ENCODE measurements at regions of chr2 and their contacts with region 1.

Region 1: DNA sequence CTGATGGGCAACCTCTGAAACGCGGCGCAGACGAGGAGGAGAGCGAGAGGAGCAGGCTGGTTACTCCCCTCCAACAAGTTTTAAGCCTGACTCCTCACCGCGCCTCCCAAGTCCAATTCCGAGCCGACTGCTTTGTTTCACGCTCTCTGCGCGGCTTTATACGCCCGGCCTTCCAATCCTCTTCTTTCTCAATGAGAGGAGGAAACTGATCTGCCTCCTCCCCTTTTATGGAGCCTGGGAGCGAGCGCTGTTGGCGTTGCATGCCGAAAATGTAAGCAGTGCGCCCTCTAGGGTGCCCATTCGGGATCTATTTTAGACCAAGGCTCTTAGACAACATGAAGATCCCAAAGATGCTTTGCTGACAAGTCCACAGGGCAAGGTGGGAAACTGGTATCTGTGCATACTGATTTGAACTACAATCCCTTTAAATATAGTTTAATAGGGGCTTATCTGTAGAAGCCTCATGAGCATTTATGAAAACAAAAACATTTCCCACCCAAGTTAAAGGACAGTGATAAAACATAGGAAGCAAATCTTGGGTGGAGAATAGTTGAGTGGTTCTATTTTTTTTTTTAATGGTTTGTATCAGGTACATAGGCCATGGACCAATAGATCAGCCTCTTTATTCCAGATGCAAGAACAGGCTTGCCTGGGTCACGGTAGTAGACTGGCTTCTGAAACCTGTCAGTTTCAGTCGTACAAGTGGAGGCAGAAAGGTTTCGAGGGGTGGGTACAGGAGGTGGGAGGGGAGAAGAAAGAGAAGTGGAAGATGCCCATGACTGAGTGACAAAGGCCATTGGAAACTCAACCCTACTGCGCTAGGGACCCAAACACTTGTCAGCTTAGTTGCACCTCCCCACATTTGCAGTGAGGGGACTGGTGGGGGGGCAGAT is at the start of gene RND3:
- DNase-seq: peak; percentile 89 to 95 (median 93)
- ATAC-seq: peak; percentile 66 to 80 (median 74)
- H3K4me3 ChIP-seq: peak within 1 kb of the TSS; percentile 43 to 75 (median 52)
- H3K27ac ChIP-seq: peak within 1 kb of the TSS; percentile 77 to 90 (median 85)
- H3K4me1 ChIP-seq: peaks cover 0 to 7% (median 0%) of the 10 kb centered on the region in 3 donors
- H3K27me3 ChIP-seq: no peaks in the 10 kb centered on the region
- CTCF ChIP-seq: peak; percentile 64 to 82 (median 74)
- total RNA-seq, gene RND3: 3.9 to 9.8 (median 5.1) TPM

Region 2: DNA sequence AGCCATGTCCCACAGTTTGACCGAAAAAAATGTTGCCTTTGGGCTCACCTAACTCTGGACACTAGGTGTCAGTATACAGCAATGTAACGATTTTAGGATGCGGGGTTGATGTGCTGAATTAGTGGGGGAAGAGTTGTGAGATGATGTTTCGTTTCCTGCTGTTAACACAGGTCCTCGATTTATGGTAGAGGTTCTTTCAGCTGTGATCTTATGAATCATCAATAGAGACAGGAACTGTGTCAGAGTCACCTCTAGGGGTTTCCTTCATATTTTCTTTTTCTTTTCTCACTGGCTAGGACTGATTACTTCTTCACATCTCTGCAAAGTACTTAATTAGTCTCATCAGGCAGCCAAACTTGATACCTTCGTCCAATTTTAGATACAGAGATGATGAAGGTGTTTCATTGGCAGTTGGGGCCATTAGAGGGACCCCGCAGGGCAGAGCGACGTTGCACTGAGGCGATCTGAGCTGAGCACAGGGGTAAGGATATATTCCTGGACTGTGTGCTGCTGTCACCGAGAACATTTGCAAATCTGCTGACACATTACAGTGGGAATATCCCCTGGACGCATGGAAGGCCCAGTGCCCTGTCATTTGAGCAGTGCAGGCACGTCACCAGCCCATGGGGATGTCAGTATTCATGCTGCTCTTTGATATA is 890.0 kb before region 1 on chr2:
- intact Hi-C with region 1: loop called in 2 of 3 experiments (anchors 5 kb)
- DNase-seq: peak in 3 of 6 donors; percentile 23 to 59 (median 25)
- ATAC-seq: peak; percentile 89 to 99 (median 97)
- H3K4me3 ChIP-seq: no peak overlapping the region
- H3K27ac ChIP-seq: no peak overlapping the region
- H3K4me1 ChIP-seq: no peaks in the 10 kb centered on the region
- H3K27me3 ChIP-seq: no peaks in the 10 kb centered on the region
- CTCF ChIP-seq: peak; percentile 46 to 76 (median 64)

Region 3: GRCh38 chr2:149808556-149808955 is 679.2 kb before region 1 on chr2:
- intact Hi-C with region 1: loop called in 1 of 3 experiments (anchors 10 kb)
- DNase-seq: no peak
- ATAC-seq: no peak
- H3K4me3 ChIP-seq: no peak overlapping the region
- H3K27ac ChIP-seq: no peak overlapping the region
- H3K4me1 ChIP-seq: no peaks in the 10 kb centered on the region
- H3K27me3 ChIP-seq: no peaks in the 10 kb centered on the region
- CTCF ChIP-seq: no peak

Region 4: DNA sequence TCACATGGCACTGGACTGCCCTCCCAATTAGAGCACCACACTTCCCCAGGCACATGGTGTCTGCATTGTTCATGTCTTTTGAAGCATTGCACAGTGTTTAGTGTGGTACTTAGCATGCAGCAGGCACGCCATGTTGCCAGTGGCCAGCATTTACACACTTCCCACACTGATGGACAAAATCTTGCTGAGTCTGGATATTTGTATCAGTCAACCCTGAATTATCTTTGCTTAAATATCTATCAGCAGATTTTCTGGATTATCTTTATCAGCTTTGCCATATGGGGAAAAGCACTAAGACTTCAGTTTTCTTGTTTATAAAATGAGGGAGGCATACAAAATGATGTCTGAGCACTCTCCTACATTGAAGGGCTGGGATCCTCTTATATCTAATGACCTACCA is 484.2 kb before region 1 on chr2:
- intact Hi-C with region 1: no loop called
- DNase-seq: no peak
- ATAC-seq: no peak
- H3K4me3 ChIP-seq: no peak overlapping the region
- H3K27ac ChIP-seq: no peak overlapping the region
- H3K4me1 ChIP-seq: no peaks in the 10 kb centered on the region
- H3K27me3 ChIP-seq: no peaks in the 10 kb centered on the region
- CTCF ChIP-seq: no peak

Region 5: DNA sequence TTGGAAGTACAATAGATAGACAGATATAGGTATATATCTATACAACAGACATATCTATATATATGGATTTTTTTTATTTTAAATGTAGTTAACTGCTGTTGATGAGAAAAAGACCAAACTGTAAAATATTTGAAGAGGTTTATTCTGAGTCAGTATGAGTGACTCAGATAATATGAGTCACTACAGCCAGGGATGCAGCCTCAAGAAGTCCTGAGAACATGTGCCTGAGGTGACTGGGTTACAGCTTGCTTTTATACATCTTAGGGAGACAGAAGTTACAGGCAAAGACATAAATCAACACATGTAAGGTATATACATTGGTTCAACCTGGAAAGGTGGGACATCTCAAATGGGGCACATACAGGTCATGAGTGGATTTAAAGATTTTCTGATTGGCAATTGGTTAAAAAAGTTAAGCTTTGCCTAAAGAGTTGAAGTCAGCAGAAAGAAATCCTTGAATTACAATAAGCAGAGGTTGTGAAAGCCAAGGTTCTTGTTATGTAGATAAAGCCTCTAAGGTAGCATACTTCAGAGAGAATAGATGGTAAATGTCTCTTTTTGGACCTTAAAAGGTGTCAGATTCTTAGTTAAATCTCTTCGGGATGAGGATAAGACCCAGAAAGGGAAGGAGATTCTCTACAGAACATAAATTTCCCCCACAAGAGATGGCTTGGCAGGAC is 624.0 kb after region 1 on chr2:
- intact Hi-C with region 1: no loop called
- DNase-seq: no peak
- ATAC-seq: peak in 1 of 4 donors; percentile 31
- H3K4me3 ChIP-seq: no peak overlapping the region
- H3K27ac ChIP-seq: no peak overlapping the region
- H3K4me1 ChIP-seq: no peaks in the 10 kb centered on the region
- H3K27me3 ChIP-seq: no peaks in the 10 kb centered on the region
- CTCF ChIP-seq: no peak